ENCODE measurements at regions of chr9 and their contacts with region 1.

Region 1: GRCh38 chr9:112361601-112362000 is 18.3 kb upstream of the HSDL2 start:
- DNase-seq: no peak
- H3K4me3 ChIP-seq: no peak overlapping the region
- H3K27ac ChIP-seq: no peak overlapping the region
- H3K4me1 ChIP-seq: no peaks in the 10 kb centered on the region
- H3K27me3 ChIP-seq: no peaks in the 10 kb centered on the region
- CTCF ChIP-seq: peak; percentile 65 to 72 (median 68)
- EP300 ChIP-seq: no peak
- POLR2A ChIP-seq: no peak

Region 2: DNA sequence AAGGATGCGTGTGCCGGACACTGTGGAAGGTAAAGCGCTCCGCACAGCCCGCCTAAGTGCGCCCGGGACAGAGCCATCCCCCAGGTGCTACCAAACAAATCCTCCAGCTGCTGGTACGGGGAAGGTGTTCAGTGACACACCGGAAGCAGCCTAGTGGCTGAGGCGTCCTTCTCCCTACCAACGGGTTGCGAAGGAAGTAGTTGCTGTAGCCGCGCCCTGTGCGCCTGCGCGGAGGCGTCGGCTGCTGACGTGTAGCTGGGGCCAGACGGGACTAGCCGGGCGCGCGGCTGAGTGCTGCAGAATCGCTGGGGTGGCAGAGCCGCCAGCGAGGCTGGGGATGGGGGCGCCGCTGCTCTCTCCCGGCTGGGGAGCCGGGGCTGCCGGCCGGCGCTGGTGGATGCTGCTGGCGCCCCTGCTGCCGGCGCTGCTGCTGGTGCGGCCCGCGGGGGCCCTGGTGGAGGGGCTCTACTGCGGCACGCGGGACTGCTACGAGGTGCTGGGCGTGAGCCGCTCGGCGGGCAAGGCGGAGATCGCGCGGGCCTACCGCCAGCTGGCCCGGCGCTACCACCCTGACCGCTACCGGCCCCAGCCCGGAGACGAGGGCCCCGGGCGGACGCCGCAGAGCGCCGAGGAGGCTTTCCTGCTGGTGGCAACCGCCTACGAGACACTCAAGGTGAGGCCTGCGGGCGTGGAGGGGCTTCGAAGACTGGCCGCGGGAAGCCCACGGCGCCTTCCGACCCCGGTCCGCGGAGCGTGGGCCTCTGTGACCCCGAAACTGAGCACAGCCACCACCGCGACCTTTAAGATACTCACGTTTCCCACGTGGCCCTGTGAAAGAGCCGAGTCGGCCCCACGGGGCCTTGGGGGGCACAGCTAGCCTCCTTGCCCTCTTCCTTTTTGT is 730.3 kb before region 1 on chr9 and contains the start of gene DNAJC25:
- in situ Hi-C with region 1: loop called in 1 of 4 experiments (anchors 25 kb)
- intact Hi-C with region 1: no loop called
- DNase-seq: peak; percentile 97
- H3K4me3 ChIP-seq: peak within 1 kb of the TSS; percentile 60 to 94 (median 90)
- H3K27ac ChIP-seq: peak within 1 kb of the TSS; percentile 84 to 99 (median 96)
- H3K4me1 ChIP-seq: peaks cover 17 to 59% (median 45%) of the 10 kb centered on the region in 4 donors
- H3K27me3 ChIP-seq: no peaks in the 10 kb centered on the region
- CTCF ChIP-seq: no peak
- EP300 ChIP-seq: no peak
- POLR2A ChIP-seq: peak; percentile 98
- total RNA-seq, gene DNAJC25: 10.1 to 19.4 (median 15.3) TPM

Region 3: GRCh38 chr9:111759762-111760639 is 601.6 kb before region 1 on chr9:
- in situ Hi-C with region 1: loop called in 3 of 4 experiments (anchors 10 to 25 kb)
- intact Hi-C with region 1: no loop called
- DNase-seq: peak; percentile 49
- H3K4me3 ChIP-seq: no peak overlapping the region
- H3K27ac ChIP-seq: no peak overlapping the region
- H3K4me1 ChIP-seq: peaks cover 3 to 7% (median 4%) of the 10 kb centered on the region in 4 donors
- H3K27me3 ChIP-seq: no peaks in the 10 kb centered on the region
- CTCF ChIP-seq: peak; percentile 59 to 81 (median 69)
- EP300 ChIP-seq: no peak
- POLR2A ChIP-seq: no peak

Region 4: DNA sequence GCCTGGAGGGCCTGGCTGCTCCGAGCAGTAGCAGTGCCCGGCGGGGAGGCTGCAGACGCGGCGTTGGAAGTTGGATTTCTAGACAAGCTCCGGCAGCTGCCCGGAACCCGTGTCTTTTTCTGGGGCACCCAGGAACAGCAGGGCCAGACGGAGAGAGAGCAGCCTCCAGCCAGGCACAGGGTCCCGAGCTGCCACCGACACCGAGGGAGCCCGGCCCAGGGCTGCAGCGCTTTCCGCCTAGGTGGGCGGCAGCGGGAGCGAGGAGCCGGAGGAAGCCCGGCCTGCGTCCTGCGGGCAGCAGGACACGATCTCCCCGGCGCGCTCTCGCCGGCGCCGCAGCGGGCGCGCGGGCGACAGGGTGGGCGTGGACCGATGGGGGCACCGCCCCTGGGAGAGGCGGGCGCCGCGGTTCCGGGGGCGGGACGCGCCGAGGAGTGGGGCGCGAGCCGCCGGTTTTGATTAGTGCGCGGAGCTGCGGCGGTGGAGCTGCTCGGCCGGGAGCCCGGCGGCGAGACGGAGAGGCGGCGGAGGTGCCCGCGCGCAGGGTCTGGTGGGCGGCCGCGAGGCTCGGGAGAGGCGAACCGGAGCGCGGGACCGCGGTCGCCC is 465.1 kb before region 1 on chr9 and contains the start of gene UGCG:
- in situ Hi-C with region 1: loop called in 1 of 4 experiments (anchors 25 kb)
- intact Hi-C with region 1: no loop called
- DNase-seq: peak; percentile 92
- H3K4me3 ChIP-seq: peak within 1 kb of the TSS; percentile 74 to 89 (median 82)
- H3K27ac ChIP-seq: peak within 1 kb of the TSS; percentile 93 to 98 (median 96)
- H3K4me1 ChIP-seq: peaks cover 16 to 54% (median 43%) of the 10 kb centered on the region in 4 donors
- H3K27me3 ChIP-seq: no peaks in the 10 kb centered on the region
- CTCF ChIP-seq: peak in 1 of 5 experiments; percentile 15
- EP300 ChIP-seq: no peak
- POLR2A ChIP-seq: peak; percentile 97
- total RNA-seq, gene UGCG: 3.8 to 62.6 (median 29.9) TPM

Region 5: GRCh38 chr9:112091810-112092209 is 269.8 kb before region 1 on chr9:
- in situ Hi-C with region 1: loop called in 3 of 4 experiments (anchors 5 to 10 kb)
- intact Hi-C with region 1: loop called (anchors 5 kb)
- DNase-seq: no peak
- H3K4me3 ChIP-seq: no peak overlapping the region
- H3K27ac ChIP-seq: no peak overlapping the region
- H3K4me1 ChIP-seq: peaks cover 0 to 6% (median 0%) of the 10 kb centered on the region in 4 donors
- H3K27me3 ChIP-seq: no peaks in the 10 kb centered on the region
- CTCF ChIP-seq: no peak
- EP300 ChIP-seq: no peak
- POLR2A ChIP-seq: no peak

Region 6: DNA sequence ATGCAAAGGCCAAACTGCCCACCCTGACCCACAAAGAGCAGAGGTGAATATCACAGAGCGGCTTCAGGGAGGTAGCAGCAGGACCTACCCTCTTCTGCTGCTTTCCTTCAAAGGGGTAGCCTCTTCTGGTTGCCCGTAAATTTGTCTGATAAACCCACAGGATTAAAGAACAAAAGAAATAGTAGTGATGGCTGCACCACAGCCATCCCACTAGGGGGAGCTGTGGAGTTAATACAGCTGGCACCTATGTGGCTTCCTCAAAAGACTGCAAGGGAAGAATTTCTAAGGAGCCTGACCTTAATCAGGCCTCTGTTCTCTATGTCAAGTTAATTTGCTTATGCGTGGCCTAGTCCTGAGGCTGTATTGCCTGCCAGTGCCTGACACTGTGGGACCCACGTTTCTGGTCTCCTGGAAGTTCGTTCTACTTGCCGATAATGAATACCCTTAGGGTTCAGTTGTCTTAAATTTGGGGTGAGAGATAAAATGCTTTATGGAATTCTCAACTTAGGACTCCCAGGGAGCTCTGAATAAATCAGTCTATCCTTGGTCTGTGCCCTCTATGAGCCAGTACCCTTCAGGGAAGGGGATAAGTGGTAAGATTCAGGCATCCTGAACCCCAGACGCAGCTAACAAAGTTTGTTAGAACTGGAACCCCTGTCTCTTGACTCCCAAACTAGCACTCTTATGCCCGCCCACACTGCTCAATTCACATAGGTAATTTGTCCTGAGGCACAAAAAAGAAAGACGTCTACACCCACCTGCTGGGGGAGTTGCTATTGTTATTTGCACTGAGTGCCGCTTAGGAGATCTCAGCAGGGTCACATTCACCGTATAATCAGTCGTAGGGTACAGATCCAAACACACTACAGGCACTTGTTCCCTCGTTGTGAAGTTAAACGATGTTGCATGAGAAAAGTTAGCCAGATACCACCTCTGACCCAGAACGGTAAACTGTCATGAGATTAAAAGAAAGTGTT is 263.6 kb before region 1 on chr9:
- in situ Hi-C with region 1: loop called in 3 of 4 experiments (anchors 5 to 10 kb)
- intact Hi-C with region 1: loop called (anchors 5 kb)
- DNase-seq: peak; percentile 54
- H3K4me3 ChIP-seq: no peak overlapping the region
- H3K27ac ChIP-seq: no peak overlapping the region
- H3K4me1 ChIP-seq: peaks cover 0 to 6% (median 0%) of the 10 kb centered on the region in 4 donors
- H3K27me3 ChIP-seq: no peaks in the 10 kb centered on the region
- CTCF ChIP-seq: peak; percentile 80 to 95 (median 86)
- EP300 ChIP-seq: no peak
- POLR2A ChIP-seq: no peak

Region 7: GRCh38 chr9:112180387-112180881 is 181.2 kb before region 1 on chr9:
- in situ Hi-C with region 1: no loop called
- intact Hi-C with region 1: no loop called
- DNase-seq: no peak
- H3K4me3 ChIP-seq: no peak overlapping the region
- H3K27ac ChIP-seq: no peak overlapping the region
- H3K4me1 ChIP-seq: peaks cover 0 to 28% (median 10%) of the 10 kb centered on the region in 4 donors
- H3K27me3 ChIP-seq: no peaks in the 10 kb centered on the region
- CTCF ChIP-seq: no peak
- EP300 ChIP-seq: no peak
- POLR2A ChIP-seq: no peak

Measured in transverse colon (tissue), 4 donors.